ENCODE measurements at regions of chr15 and their contacts with region 1.

Region 1: DNA sequence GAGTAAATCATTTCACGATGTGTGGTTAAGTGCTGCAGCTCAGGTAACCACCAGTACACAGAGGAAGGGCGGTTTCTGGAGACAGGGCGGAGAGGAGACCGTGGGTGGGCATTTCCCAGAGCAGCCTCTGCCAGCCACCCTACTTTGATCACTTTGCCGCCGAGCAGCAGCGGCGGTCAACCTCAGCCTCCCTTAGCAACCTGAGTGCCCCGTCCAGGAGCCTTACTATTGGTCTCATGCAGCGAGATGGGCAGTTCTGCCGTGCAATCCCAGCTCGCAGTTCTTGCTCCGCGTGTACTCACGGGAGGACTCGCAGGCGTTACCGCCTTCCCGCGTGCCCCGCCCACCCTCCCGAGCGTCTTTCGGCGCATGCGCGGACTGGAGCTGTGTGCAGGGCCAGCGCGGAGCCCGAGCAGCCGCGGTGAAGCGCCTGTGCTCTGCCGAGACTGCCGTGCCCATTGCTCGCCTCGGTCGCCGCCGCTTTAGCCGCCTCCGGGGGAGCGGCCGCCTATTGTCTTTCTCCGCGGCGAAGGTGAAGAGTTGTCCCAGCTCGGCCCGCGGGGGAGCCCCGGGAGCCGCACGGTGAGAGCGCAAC is at the start of gene AKAP13:
- DNase-seq: peak; percentile 97
- H3K4me3 Mint-ChIP-seq: peak within 1 kb of the TSS; percentile 78
- H3K27ac Mint-ChIP-seq: peak within 1 kb of the TSS; percentile 95
- H3K4me1 Mint-ChIP-seq: peaks cover 69% of the 10 kb centered on the region
- H3K27me3 Mint-ChIP-seq: peaks cover 4% of the 10 kb centered on the region
- total RNA-seq, gene AKAP13: 153 to 170 TPM

Region 2: DNA sequence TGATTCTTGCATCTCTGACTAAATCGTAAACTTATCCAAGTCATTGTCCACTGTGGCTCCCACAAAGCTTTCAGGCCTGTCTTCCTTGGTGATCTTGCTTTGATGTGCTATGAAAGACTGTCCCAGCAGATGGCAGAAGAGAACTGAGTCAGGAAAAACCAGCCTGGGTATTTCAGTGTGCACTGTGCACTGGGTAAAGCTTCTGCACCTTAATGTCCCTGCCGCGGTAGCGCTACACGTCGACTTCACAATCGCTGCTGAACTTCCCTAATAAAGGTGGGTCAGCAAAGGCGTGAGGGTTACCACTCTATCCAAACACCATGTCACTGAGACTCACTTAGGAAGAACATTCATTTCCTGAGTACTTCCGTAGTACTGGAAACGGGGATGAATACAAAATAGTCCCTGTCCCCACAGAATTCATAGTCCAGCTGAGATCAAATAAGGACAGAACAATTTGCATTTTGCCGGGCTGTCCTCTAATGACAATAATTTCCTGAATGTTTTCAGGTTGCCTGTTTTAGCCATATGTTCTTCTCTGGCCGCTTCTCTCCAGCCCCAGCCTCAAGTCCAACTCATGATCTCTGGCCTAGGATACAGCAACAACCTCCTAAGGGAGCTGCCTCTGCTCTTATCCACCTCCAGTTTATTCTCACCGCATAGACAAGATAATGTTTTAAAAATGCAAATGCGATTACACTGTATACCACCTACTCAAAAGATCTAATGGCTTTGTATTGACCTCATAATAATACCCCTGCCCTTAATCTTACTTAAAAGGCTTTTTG is 83.5 kb before region 1 on chr15:
- CTCF ChIA-PET with region 1: interaction called, 12 read pairs
- POLR2A ChIA-PET with region 1: interaction called, 10 read pairs
- DNase-seq: peak; percentile 75
- H3K4me3 Mint-ChIP-seq: peak overlapping the region; percentile 3
- H3K27ac Mint-ChIP-seq: no peak overlapping the region
- H3K4me1 Mint-ChIP-seq: peaks cover 20% of the 10 kb centered on the region
- H3K27me3 Mint-ChIP-seq: peaks cover 1% of the 10 kb centered on the region

Region 3: GRCh38 chr15:85330901-85331588 is 49.3 kb before region 1 on chr15:
- CTCF ChIA-PET with region 1: interaction called, 38 read pairs
- POLR2A ChIA-PET with region 1: interaction called, 106 read pairs
- DNase-seq: peak; percentile 92
- H3K4me3 Mint-ChIP-seq: peak overlapping the region; percentile 88
- H3K27ac Mint-ChIP-seq: peak overlapping the region; percentile 98
- H3K4me1 Mint-ChIP-seq: peaks cover 47% of the 10 kb centered on the region
- H3K27me3 Mint-ChIP-seq: no peaks in the 10 kb centered on the region

Region 4: GRCh38 chr15:85367741-85368140 is 12.6 kb before region 1 on chr15:
- CTCF ChIA-PET with region 1: interaction called, 4 read pairs
- POLR2A ChIA-PET with region 1: interaction called, 11 read pairs
- DNase-seq: no peak
- H3K4me3 Mint-ChIP-seq: no peak overlapping the region
- H3K27ac Mint-ChIP-seq: no peak overlapping the region
- H3K4me1 Mint-ChIP-seq: peaks cover 9% of the 10 kb centered on the region
- H3K27me3 Mint-ChIP-seq: peaks cover 12% of the 10 kb centered on the region

Region 5: DNA sequence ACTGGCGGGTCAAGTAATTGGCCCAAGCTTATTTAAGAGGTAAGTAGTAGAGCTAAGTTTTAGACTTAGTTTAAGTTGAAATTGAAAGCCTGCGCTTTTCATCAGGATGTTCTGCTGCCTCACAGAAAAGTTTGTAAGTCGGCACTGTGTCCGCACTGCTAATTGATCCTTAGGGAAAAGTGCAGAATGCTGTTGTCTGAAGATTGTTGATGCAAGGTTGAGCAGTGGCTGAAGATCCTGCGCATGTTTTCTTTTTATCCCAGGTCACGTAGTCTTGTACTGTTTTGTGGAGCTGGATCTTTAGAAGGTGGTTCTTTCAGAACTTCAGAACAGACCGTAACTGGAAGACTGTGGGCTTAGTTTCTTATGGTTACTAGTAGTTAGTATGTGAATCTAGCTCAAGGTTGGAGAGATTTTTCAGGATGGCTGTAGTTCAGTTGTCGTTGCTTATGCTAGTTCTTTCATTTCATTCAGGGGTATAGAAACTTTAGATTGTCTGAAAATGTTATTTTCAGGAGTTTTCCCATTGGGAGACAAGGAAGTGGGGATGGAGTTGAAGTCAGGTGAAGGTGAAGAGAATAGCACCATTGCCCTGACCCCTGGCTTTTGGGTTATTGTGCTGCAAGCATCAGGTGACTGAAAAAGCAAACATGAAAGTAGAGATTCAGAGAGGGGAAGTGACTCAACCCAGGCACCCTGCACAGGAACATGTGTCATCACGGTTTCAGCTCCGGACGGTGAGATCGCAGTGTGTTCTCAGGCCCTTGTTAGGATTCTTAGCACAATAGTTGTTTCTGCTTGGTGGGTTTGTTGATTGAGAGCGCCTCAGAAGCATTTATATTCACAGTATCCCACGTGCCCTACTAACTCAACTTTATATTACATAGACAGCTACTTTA is 32.9 kb after region 1 on chr15:
- CTCF ChIA-PET with region 1: interaction called, 18 read pairs
- POLR2A ChIA-PET with region 1: interaction called, 64 read pairs
- DNase-seq: peak; percentile 84
- H3K4me3 Mint-ChIP-seq: peak overlapping the region; percentile 53
- H3K27ac Mint-ChIP-seq: peak overlapping the region; percentile 86
- H3K4me1 Mint-ChIP-seq: peaks cover 67% of the 10 kb centered on the region
- H3K27me3 Mint-ChIP-seq: no peaks in the 10 kb centered on the region

Region 6: GRCh38 chr15:85443593-85444087 is 63.3 kb after region 1 on chr15:
- CTCF ChIA-PET with region 1: no interaction called
- POLR2A ChIA-PET with region 1: no interaction called
- DNase-seq: peak; percentile 39
- H3K4me3 Mint-ChIP-seq: no peak overlapping the region
- H3K27ac Mint-ChIP-seq: no peak overlapping the region
- H3K4me1 Mint-ChIP-seq: peaks cover 36% of the 10 kb centered on the region
- H3K27me3 Mint-ChIP-seq: peaks cover 1% of the 10 kb centered on the region

Region 7: DNA sequence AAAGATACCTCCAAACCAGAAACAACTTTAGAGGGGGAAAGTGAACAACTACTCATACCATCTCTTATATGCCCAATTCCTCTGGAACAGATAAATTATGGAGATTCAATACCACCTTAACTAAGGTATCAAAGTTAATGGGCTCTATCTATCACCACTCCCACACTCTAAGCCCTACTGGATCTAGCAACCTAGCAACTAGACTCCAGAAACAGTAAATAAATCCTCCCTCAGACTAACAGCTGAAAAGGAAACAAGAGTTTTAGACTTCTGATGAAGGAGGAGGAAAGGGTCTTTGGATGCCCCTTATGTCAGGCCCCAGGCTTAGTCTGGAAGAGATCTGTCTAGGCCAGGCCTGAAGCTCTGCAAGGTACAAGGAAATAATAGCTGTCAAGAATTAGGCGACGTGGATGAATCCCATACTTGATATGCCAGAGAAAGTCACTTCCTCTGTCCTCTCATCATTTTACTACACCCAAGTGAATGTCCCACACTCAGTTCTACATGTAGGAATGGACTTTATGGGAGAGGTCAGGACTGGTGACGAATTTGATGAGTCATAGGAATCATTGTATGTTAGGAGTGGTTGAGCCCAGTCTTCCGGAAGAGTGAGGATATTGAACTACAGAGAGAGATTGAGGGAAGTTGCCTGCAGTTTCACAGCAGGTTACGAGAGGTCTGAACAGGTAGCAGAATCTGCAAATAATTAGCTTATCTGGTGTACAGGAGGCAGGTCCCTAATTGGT is 113.9 kb after region 1 on chr15:
- CTCF ChIA-PET with region 1: no interaction called
- POLR2A ChIA-PET with region 1: no interaction called
- DNase-seq: no peak
- H3K4me3 Mint-ChIP-seq: no peak overlapping the region
- H3K27ac Mint-ChIP-seq: no peak overlapping the region
- H3K4me1 Mint-ChIP-seq: peaks cover 42% of the 10 kb centered on the region
- H3K27me3 Mint-ChIP-seq: no peaks in the 10 kb centered on the region

Region 8: GRCh38 chr15:85592148-85592547 is 211.8 kb after region 1 on chr15:
- CTCF ChIA-PET with region 1: no interaction called
- POLR2A ChIA-PET with region 1: no interaction called
- DNase-seq: no peak
- H3K4me3 Mint-ChIP-seq: no peak overlapping the region
- H3K27ac Mint-ChIP-seq: no peak overlapping the region
- H3K4me1 Mint-ChIP-seq: peaks cover 40% of the 10 kb centered on the region
- H3K27me3 Mint-ChIP-seq: no peaks in the 10 kb centered on the region

Region 9: DNA sequence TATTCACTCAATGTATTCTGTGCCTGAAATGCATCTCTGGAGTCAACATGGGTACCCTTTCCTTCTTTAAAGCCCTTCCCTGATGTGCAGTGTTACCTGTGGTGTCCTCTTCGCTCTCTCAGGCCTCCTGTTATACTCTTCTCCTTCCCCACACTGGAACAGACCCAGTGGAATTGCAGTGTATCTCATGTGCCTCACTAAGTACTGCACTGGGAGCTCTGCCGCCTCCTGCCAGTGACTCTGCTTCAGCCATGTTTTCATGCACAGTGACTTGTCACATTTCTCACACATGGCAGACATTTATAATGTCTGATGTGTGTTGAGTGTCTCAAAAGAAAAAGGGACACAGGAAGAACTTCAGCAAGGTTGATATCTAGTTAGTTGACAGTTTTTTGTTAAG is 223.4 kb after region 1 on chr15:
- CTCF ChIA-PET with region 1: no interaction called
- POLR2A ChIA-PET with region 1: no interaction called
- DNase-seq: no peak
- H3K4me3 Mint-ChIP-seq: no peak overlapping the region
- H3K27ac Mint-ChIP-seq: peak overlapping the region; percentile 31
- H3K4me1 Mint-ChIP-seq: peaks cover 28% of the 10 kb centered on the region
- H3K27me3 Mint-ChIP-seq: no peaks in the 10 kb centered on the region

Region 10: DNA sequence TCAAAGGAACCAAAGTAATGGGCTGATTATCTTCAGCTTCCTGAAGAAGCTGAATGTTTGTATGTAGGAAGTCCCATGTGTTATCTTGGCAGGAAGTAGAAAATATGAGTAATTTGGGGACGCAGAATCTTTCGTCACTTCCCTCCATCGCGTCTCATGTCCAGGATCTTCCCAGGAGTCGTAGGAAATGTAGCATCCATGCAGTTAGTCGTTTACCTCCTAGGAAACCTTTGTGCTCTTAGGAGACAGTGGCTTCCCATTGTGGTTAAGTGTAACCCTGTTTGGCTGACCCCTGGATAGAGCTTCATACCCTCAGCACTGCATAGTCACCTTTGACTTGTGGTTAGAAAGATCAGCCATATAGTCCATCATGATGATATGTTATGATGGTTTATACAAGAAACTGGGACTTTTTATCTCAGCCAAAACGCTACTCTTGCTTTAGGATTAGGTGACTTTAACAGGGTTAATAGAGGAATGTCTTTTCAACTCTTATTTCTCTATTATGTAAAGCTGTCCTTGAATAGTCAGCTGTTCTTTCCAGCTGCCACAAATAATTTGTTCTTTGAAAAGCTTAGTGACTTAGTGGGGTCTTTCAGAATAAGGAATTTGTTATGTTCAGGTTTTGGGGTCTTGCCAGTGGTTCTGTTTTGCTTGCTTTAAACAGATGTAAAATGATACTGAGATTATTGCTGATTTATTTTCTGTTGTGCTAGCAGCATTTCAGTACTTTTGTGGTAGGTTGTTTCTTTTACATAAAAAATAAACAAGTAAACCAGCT is 322.2 kb after region 1 on chr15:
- CTCF ChIA-PET with region 1: no interaction called
- POLR2A ChIA-PET with region 1: interaction called, 13 read pairs
- DNase-seq: peak; percentile 44
- H3K4me3 Mint-ChIP-seq: peak overlapping the region; percentile 69
- H3K27ac Mint-ChIP-seq: peak overlapping the region; percentile 88
- H3K4me1 Mint-ChIP-seq: peaks cover 60% of the 10 kb centered on the region
- H3K27me3 Mint-ChIP-seq: no peaks in the 10 kb centered on the region

Measured in activated CD4-positive, alpha-beta memory T cell treated with anti-CD3 and anti-CD28 coated beads, Interleukin-2, amount 10 ng/mL, durations not matched to agents 7 days and 5 days (primary cell).